ENCODE measurements at regions of chr1 and their contacts with region 1.

Region 1: GRCh38 chr1:41851589-41851988 is 67.1 kb downstream of the HIVEP3 start:
- DNase-seq: no peak
- H3K4me3 ChIP-seq: no peak overlapping the region
- H3K27ac ChIP-seq: no peak overlapping the region
- H3K27me3 ChIP-seq: no peaks in the 10 kb centered on the region
- CTCF ChIP-seq: no peak

Region 2: GRCh38 chr1:41868599-41868998 is 17.0 kb after region 1 on chr1:
- CTCF ChIA-PET with region 1: no interaction called
- POLR2A ChIA-PET with region 1: no interaction called
- DNase-seq: no peak
- H3K4me3 ChIP-seq: no peak overlapping the region
- H3K27ac ChIP-seq: no peak overlapping the region
- H3K27me3 ChIP-seq: no peaks in the 10 kb centered on the region
- CTCF ChIP-seq: no peak

Region 3: GRCh38 chr1:42613803-42614131 is 762.2 kb after region 1 on chr1:
- CTCF ChIA-PET with region 1: no interaction called
- POLR2A ChIA-PET with region 1: interaction called, 14 read pairs
- DNase-seq: no peak
- H3K4me3 ChIP-seq: no peak overlapping the region
- H3K27ac ChIP-seq: no peak overlapping the region
- H3K27me3 ChIP-seq: no peaks in the 10 kb centered on the region
- CTCF ChIP-seq: no peak